ENCODE measurements at regions of chr22 and their contacts with region 1.

Region 1: GRCh38 chr22:17830043-17830961 is 56.0 kb upstream of the BID start:
- DNase-seq: peak; percentile 81 to 98
- H3K4me3 ChIP-seq: no peak overlapping the region
- H3K27ac ChIP-seq: no peak overlapping the region
- H3K4me1 ChIP-seq: no peaks in the 10 kb centered on the region
- H3K27me3 ChIP-seq: no peaks in the 10 kb centered on the region
- CTCF ChIP-seq: peak; percentile 94 to 100 (median 98)
- EP300 ChIP-seq: no peak
- POLR2A ChIP-seq: no peak
- RAD21 ChIP-seq: peak; percentile 95 to 99

Region 2: DNA sequence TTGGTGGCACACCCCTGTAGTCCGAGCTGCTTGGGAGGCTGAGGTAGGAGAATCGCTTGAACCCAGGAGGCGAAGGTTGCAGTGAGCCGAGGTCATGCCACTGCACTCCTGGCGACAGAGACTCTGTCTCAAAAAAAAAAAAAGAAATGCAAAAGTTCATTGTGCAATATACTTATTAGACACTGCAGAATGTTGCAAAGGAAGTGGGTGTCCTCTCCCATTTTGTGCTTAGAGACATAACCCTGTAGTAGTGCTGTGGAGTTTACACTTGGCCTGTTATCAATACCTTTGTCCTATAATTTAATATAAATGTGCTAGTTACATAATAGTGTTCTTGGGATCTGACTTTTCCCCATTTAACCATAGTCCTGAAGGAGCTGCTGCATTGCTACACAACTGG is 182.3 kb before region 1 on chr22:
- CTCF ChIA-PET with region 1: no interaction called
- POLR2A ChIA-PET with region 1: no interaction called
- DNase-seq: no peak
- H3K4me3 ChIP-seq: no peak overlapping the region
- H3K27ac ChIP-seq: no peak overlapping the region
- H3K4me1 ChIP-seq: no peaks in the 10 kb centered on the region
- H3K27me3 ChIP-seq: no peaks in the 10 kb centered on the region
- CTCF ChIP-seq: no peak
- EP300 ChIP-seq: no peak
- POLR2A ChIP-seq: no peak
- RAD21 ChIP-seq: no peak

Region 3: GRCh38 chr22:17742527-17742902 is 87.8 kb before region 1 on chr22:
- CTCF ChIA-PET with region 1: interaction called, 39 read pairs
- POLR2A ChIA-PET with region 1: no interaction called
- DNase-seq: peak; percentile 80 to 96
- H3K4me3 ChIP-seq: no peak overlapping the region
- H3K27ac ChIP-seq: no peak overlapping the region
- H3K4me1 ChIP-seq: peaks cover 0 to 7% (median 4%) of the 10 kb centered on the region in 4 experiments; a peak in 5 of 7 replicates
- H3K27me3 ChIP-seq: no peaks in the 10 kb centered on the region
- CTCF ChIP-seq: peak; percentile 90 to 98 (median 96)
- EP300 ChIP-seq: peak in 1 of 2 experiments; percentile 64; a peak in 1 of 3 replicates
- POLR2A ChIP-seq: no peak
- RAD21 ChIP-seq: peak; percentile 94 to 97

Region 4: GRCh38 chr22:17792299-17792698 is 38.0 kb before region 1 on chr22:
- CTCF ChIA-PET with region 1: interaction called, 18 read pairs
- POLR2A ChIA-PET with region 1: no interaction called
- DNase-seq: peak in 1 of 2 experiments; percentile 70
- H3K4me3 ChIP-seq: no peak overlapping the region
- H3K27ac ChIP-seq: no peak overlapping the region
- H3K4me1 ChIP-seq: no peaks in the 10 kb centered on the region
- H3K27me3 ChIP-seq: no peaks in the 10 kb centered on the region
- CTCF ChIP-seq: peak; percentile 50 to 69 (median 60)
- EP300 ChIP-seq: no peak
- POLR2A ChIP-seq: no peak
- RAD21 ChIP-seq: peak; percentile 50 to 62

Region 5: DNA sequence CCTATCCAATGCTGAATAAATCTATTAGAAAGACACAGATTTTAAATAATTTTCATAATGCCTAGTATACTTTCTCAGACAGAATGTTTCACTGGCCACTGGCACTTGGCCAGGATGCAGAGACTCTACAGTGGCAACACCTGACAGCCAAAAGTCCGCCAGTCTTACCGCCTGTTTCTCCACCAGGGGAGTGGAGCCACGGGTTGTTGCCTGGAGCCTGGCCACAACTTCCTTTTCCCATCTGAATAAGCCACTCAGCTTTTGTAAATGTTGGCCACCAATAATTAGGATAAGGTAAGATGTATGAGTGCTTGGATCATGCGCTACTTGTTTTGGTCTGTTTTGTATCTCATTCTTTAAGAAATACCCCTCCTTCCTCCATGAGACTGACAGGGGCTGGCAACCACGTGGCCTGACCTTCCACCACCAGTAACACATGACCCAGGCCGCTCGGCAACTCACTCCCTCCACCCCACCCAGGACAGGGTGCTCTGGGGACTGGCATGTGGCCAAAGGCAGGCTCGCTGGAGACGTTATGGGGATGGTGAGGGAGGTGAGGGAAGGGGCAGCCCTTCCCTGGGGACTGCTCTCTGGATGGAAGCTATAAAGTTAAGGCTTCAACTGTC is 37.0 kb after region 1 on chr22:
- CTCF ChIA-PET with region 1: interaction called, 14 read pairs
- POLR2A ChIA-PET with region 1: no interaction called
- DNase-seq: no peak
- H3K4me3 ChIP-seq: no peak overlapping the region
- H3K27ac ChIP-seq: no peak overlapping the region
- H3K4me1 ChIP-seq: no peaks in the 10 kb centered on the region
- H3K27me3 ChIP-seq: no peaks in the 10 kb centered on the region
- CTCF ChIP-seq: no peak
- EP300 ChIP-seq: no peak
- POLR2A ChIP-seq: no peak
- RAD21 ChIP-seq: no peak

Region 6: GRCh38 chr22:17891481-17892167 is 61.3 kb after region 1 on chr22:
- CTCF ChIA-PET with region 1: interaction called, 37 read pairs
- POLR2A ChIA-PET with region 1: no interaction called
- DNase-seq: peak in 1 of 2 experiments; percentile 64
- H3K4me3 ChIP-seq: no peak overlapping the region
- H3K27ac ChIP-seq: no peak overlapping the region
- H3K4me1 ChIP-seq: no peaks in the 10 kb centered on the region
- H3K27me3 ChIP-seq: no peaks in the 10 kb centered on the region
- CTCF ChIP-seq: peak; percentile 60 to 86 (median 71)
- EP300 ChIP-seq: no peak
- POLR2A ChIP-seq: no peak
- RAD21 ChIP-seq: peak; percentile 52 to 64

Region 7: GRCh38 chr22:18065256-18065655 is 235.0 kb after region 1 on chr22:
- CTCF ChIA-PET with region 1: interaction called, 163 read pairs
- POLR2A ChIA-PET with region 1: no interaction called
- DNase-seq: peak in 1 of 2 experiments; percentile 61
- H3K4me3 ChIP-seq: no peak overlapping the region
- H3K27ac ChIP-seq: no peak overlapping the region
- H3K4me1 ChIP-seq: peaks cover 0 to 3% (median 0%) of the 10 kb centered on the region in 4 experiments; a peak in 2 of 7 replicates
- H3K27me3 ChIP-seq: peaks cover 0 to 2% (median 0%) of the 10 kb centered on the region in 4 experiments; a peak in 2 of 7 replicates
- CTCF ChIP-seq: peak; percentile 38 to 47 (median 46); a peak in 3 of 4 replicates
- EP300 ChIP-seq: no peak
- POLR2A ChIP-seq: no peak
- RAD21 ChIP-seq: peak; percentile 57 to 59

Measured in H1 (cell line).